Sigmoid colon (tissue), 7 donors: ENCODE measurements at regions of chr9 and their contacts with region 1.

Region 1: GRCh38 chr9:94259077-94259892 is at the start of gene ZNF169:
- DNase-seq: peak; percentile 96
- H3K4me3 ChIP-seq: peak within 1 kb of the TSS; percentile 48 to 93 (median 86)
- H3K27ac ChIP-seq: peak within 1 kb of the TSS; percentile 55 to 80 (median 76)
- H3K4me1 ChIP-seq: peaks cover 0 to 16% (median 14%) of the 10 kb centered on the region in 4 donors
- H3K27me3 ChIP-seq: no peaks in the 10 kb centered on the region
- CTCF ChIP-seq: no peak
- EP300 ChIP-seq: no peak
- POLR2A ChIP-seq: peak in 1 of 2 donors; percentile 25
- total RNA-seq, gene ZNF169: 9.6 to 24.6 (median 16.9) TPM

Region 2: DNA sequence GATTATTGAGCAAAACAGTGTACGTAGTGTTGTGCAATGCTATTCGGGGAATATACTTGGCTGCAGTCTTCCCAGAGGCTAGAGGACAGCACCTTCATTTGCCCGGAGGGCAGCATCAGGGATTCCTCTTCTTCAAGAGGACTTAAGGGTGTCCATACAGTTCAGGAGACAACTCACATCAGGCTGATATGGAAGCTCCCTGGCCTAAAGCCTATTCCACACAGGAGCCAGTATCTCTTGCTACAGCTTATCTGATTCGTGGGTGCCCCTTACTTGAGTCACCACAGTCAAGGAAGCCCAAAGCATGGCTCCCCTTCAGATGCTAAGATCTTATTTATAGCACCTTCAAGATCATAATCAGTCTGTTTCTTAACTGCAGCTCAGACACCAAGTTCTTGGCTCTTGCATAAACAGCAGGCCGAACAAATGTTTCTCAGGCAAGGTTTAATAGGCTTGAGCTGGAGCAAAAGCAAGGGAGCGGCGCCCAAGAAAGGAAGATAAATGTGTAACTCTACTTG is 39.8 kb after region 1 on chr9:
- intact Hi-C with region 1: loop called (anchors 5 kb)
- DNase-seq: peak; percentile 84
- H3K4me3 ChIP-seq: no peak overlapping the region
- H3K27ac ChIP-seq: peak overlapping the region in 3 of 4 donors; percentile 71 to 82 (median 73)
- H3K4me1 ChIP-seq: peaks cover 0 to 29% (median 20%) of the 10 kb centered on the region in 4 donors
- H3K27me3 ChIP-seq: no peaks in the 10 kb centered on the region
- CTCF ChIP-seq: no peak
- EP300 ChIP-seq: peak in 1 of 4 donors; percentile 11
- POLR2A ChIP-seq: no peak